ENCODE measurements at regions of chr1 and their contacts with region 1.

Region 1: DNA sequence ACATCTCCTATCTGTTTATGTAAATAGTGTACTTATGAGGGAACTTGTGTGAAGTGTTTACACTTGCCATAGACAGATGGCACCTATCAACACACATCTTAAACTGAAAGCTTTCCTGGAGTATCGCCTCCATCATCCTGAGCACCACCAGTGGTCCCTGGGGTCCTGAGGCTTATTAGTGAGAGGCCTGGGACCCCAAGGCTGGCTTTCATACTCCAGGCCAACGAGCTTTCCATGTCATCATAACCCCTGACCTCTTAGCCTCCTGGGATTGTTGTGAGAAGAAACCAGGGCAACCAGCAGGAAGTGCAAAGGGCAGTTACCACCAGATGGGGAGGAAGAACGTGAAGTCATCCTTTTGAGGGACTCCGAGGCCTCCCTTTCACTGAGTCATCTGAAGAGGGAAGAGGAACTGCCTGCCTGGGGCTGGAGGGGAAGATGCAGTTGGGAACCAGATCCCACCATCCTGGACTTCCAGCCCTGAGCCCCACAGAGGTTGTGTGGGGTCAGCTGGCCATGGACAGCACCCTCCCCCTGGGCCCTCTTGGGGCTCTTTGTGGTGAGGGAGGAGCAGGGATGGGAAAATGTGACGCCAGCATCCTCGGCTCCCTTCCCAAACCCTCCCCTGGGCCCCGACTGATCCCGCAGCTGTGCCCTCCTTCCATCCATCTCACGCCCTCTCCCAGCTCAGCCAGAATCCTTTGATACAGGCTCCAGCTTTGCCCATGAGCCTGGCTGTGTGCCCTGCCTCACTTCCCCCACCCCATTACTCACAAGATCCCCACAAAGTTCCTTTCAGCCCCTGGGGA is 5.8 kb downstream of the INKA2 start:
- DNase-seq: peak in 4 of 35 experiments; percentile 3 to 27 (median 16)
- ATAC-seq: no peak
- H3K4me3 ChIP-seq: no peak overlapping the region
- H3K4me3 Mint-ChIP-seq: no peak overlapping the region
- H3K27ac ChIP-seq: no peak overlapping the region
- H3K27ac Mint-ChIP-seq: no peak overlapping the region
- H3K4me1 ChIP-seq: peaks cover 0 to 13% of the 10 kb centered on the region in 2 experiments
- H3K4me1 Mint-ChIP-seq: peaks cover 8 to 11% (median 10%) of the 10 kb centered on the region in 3 donors
- H3K27me3 ChIP-seq: peaks cover 0 to 41% of the 10 kb centered on the region in 2 experiments
- H3K27me3 Mint-ChIP-seq: peaks cover 7 to 10% of the 10 kb centered on the region in 2 donors

Region 2: GRCh38 chr1:111553196-111553595 is 180.2 kb before region 1 on chr1:
- CTCF ChIA-PET with region 1: no interaction called
- POLR2A ChIA-PET with region 1: interaction called in 1 of 2 experiments, 13 read pairs
- DNase-seq: no peak
- ATAC-seq: no peak
- H3K4me3 ChIP-seq: no peak overlapping the region
- H3K4me3 Mint-ChIP-seq: no peak overlapping the region
- H3K27ac ChIP-seq: no peak overlapping the region
- H3K27ac Mint-ChIP-seq: no peak overlapping the region
- H3K4me1 ChIP-seq: no peaks in the 10 kb centered on the region
- H3K4me1 Mint-ChIP-seq: peaks cover 0 to 6% (median 6%) of the 10 kb centered on the region in 3 donors
- H3K27me3 ChIP-seq: no peaks in the 10 kb centered on the region
- H3K27me3 Mint-ChIP-seq: no peaks in the 10 kb centered on the region